ENCODE measurements at regions of chr11 and their contacts with region 1.

Region 1: DNA sequence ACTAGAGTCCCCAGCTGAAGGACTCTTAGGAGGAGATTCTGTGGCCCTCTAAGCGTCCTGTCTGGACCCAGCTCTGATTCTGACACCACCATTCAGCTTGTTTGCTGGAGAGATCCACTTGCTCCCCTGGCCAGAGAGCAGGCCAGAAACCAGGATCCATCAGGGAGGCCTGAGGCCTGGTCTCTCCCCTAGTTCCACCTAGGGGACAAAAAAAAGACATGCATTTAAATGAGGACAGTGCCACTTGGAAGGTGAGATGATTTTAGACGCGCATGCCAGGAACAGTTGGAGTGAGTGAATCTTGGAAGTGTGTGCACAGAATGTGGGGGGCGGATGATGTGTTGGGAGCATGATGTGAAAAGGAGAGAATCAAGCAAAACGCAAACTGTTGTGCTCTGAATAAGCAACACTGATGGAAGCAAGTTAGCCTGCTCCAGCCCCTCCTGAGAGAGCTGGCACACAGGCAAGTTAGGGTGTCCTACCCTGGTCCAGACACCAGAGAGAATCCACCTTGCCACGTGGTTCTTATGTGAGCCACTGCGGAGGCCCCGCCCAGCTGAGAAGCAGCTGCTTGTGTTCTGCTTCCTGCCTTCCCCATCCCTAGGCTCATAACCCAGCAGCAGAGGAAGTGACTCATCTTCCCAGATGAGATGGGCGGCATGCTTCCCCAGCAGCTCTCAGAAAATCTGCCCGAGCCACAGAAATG is 8.0 kb upstream of the SLCO2B1 start:
- DNase-seq: peak; percentile 28 to 79 (median 49)
- ATAC-seq: peak; percentile 92 to 96 (median 96)
- H3K4me3 ChIP-seq: no peak overlapping the region
- H3K4me3 Mint-ChIP-seq: peak overlapping the region; percentile 35 to 61 (median 44)
- H3K27ac ChIP-seq: peak overlapping the region; percentile 50
- H3K27ac Mint-ChIP-seq: peak overlapping the region; percentile 92 to 96
- H3K4me1 ChIP-seq: peaks cover 11 to 40% of the 10 kb centered on the region in 2 experiments
- H3K4me1 Mint-ChIP-seq: peaks cover 40 to 46% (median 41%) of the 10 kb centered on the region in 3 donors
- H3K27me3 ChIP-seq: no peaks in the 10 kb centered on the region
- H3K27me3 Mint-ChIP-seq: peaks cover 3 to 4% of the 10 kb centered on the region in 2 donors

Region 2: DNA sequence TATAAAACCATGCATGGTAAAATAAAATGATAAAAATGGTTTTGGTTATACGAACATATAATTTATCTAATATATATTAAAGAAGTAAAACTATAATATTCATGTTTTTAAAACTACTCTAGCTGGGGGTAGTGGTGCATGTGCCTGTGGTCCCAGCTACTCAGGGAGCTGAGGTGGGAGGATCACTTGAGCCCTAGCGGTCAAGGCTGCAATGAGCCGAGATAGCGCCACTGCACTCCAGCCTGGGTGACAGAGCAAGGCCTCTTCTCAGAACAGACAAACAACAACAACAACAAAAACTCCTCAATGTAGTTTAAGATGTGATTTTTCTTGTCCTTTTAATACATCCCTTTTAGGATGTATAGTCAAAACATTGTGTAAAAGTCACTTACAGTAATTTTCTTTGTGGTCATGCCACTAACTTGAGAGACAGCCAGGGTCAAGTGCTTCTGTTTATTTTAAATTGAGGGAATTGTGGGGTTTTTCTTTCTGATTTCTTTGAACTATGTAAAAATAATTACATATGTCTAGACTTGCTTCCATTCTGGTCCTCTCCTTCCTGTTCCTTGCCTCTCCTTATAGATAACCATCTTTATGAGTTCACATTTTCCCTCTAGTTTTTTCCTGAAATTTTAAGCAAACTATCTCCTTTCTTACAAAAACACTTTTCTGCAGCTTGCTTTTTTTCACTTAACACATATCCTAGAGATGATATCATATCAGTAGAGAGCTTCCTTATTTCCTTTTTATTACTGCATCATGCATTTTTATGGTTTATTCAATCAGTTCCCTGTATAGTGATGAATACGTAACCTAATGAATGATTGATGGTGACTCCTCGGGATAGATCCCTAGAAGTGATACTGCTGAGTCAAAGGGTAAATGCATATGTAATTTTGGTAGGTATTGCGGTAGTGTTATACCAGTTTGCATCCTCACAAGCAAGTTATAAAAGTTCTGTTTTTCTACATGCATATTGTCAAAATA is 55.3 kb before region 1 on chr11:
- CTCF ChIA-PET with region 1: no interaction called
- POLR2A ChIA-PET with region 1: no interaction called
- DNase-seq: no peak
- ATAC-seq: no peak
- H3K4me3 ChIP-seq: no peak overlapping the region
- H3K4me3 Mint-ChIP-seq: no peak overlapping the region
- H3K27ac ChIP-seq: no peak overlapping the region
- H3K27ac Mint-ChIP-seq: no peak overlapping the region
- H3K4me1 ChIP-seq: no peaks in the 10 kb centered on the region
- H3K4me1 Mint-ChIP-seq: peaks cover 0 to 6% (median 0%) of the 10 kb centered on the region in 3 donors
- H3K27me3 ChIP-seq: peaks cover 2 to 13% of the 10 kb centered on the region in 2 experiments
- H3K27me3 Mint-ChIP-seq: peaks cover 28% of the 10 kb centered on the region in 2 donors

Region 3: DNA sequence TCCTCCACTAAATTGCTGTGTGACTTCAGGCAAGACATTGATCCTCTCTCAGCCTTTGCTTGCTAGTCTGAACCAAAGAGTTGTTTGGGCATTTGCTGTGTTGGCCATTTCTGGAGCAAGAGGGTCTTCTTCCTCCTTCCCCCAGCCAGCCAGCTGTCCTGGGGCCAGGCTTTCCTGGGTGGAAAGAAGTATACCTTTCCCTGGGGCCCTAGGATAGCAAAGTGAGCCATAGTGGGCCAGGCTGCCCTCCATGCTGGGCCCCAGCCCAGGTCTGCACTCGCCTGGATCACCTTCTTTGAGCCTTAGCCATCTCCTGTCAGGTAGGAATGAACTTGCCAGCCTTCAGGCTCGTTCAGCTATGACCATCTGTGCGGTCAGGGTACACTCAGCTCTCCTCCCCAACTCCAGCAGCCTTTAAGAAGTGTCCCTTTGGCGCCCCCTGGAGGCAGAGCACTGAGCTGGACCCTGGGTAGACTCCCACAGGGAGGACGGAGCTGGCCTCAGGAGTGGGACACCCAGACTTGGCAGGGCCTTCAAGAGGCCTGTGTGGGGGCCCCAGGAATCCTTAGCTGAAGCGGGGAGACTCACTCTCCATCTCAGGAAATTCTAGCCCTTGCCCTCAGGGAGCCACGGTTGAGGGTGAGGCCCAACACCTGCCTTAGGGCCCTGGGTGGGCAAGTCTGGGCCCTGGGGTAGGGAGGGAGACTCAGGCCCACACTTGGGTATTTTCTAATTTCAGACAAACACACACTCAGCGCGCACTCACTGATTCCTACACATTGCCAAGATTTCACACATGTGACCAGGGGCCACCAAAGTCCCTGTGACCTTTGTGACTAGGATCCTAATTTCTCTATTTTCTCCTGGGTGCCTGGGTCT is 62.1 kb after region 1 on chr11:
- CTCF ChIA-PET with region 1: interaction called, 6 to 53 read pairs
- POLR2A ChIA-PET with region 1: no interaction called
- DNase-seq: peak; percentile 38 to 85 (median 71)
- ATAC-seq: peak; percentile 74 to 87 (median 80)
- H3K4me3 ChIP-seq: no peak overlapping the region
- H3K4me3 Mint-ChIP-seq: no peak overlapping the region
- H3K27ac ChIP-seq: no peak overlapping the region
- H3K27ac Mint-ChIP-seq: no peak overlapping the region
- H3K4me1 ChIP-seq: peaks cover 0 to 4% of the 10 kb centered on the region in 2 experiments
- H3K4me1 Mint-ChIP-seq: no peaks in the 10 kb centered on the region
- H3K27me3 ChIP-seq: peaks cover 0 to 41% of the 10 kb centered on the region in 2 experiments
- H3K27me3 Mint-ChIP-seq: peaks cover 3 to 4% of the 10 kb centered on the region in 2 donors

Region 4: DNA sequence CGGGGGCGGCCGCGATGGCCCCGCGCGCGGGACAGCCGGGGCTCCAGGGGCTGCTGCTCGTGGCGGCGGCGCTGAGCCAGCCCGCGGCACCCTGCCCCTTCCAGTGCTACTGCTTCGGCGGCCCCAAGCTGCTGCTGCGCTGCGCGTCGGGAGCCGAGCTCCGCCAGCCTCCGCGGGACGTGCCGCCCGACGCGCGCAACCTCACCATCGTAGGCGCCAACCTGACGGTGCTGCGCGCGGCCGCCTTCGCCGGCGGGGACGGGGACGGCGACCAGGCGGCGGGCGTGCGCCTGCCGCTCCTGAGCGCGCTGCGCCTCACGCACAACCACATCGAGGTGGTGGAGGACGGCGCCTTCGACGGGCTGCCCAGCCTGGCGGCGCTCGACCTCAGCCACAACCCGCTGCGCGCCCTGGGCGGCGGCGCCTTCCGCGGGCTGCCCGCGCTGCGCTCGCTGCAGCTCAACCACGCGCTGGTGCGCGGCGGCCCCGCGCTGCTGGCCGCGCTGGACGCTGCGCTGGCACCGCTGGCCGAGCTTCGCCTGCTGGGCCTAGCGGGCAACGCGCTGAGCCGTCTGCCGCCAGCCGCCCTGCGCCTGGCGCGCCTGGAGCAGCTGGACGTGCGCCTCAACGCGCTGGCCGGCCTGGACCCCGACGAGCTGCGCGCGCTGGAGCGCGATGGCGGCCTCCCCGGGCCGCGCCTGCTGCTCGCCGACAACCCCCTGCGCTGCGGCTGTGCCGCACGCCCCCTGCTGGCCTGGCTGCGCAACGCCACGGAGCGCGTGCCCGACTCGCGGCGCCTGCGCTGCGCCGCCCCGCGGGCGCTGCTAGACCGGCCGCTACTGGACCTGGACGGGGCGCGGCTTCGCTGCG is 98.4 kb after region 1 on chr11:
- CTCF ChIA-PET with region 1: interaction called, 4 to 22 read pairs
- POLR2A ChIA-PET with region 1: no interaction called
- DNase-seq: peak in 34 of 35 experiments; percentile 67 to 92 (median 78)
- ATAC-seq: peak; percentile 90 to 93 (median 92)
- H3K4me3 ChIP-seq: peak overlapping the region; percentile 34 to 71
- H3K4me3 Mint-ChIP-seq: peak overlapping the region; percentile 68 to 84 (median 73)
- H3K27ac ChIP-seq: no peak overlapping the region
- H3K27ac Mint-ChIP-seq: no peak overlapping the region
- H3K4me1 ChIP-seq: peaks cover 0 to 13% of the 10 kb centered on the region in 2 experiments
- H3K4me1 Mint-ChIP-seq: peaks cover 6 to 13% (median 10%) of the 10 kb centered on the region in 3 donors
- H3K27me3 ChIP-seq: peaks cover 14 to 60% of the 10 kb centered on the region in 2 experiments
- H3K27me3 Mint-ChIP-seq: peaks cover 26 to 44% of the 10 kb centered on the region in 2 donors

Region 5: DNA sequence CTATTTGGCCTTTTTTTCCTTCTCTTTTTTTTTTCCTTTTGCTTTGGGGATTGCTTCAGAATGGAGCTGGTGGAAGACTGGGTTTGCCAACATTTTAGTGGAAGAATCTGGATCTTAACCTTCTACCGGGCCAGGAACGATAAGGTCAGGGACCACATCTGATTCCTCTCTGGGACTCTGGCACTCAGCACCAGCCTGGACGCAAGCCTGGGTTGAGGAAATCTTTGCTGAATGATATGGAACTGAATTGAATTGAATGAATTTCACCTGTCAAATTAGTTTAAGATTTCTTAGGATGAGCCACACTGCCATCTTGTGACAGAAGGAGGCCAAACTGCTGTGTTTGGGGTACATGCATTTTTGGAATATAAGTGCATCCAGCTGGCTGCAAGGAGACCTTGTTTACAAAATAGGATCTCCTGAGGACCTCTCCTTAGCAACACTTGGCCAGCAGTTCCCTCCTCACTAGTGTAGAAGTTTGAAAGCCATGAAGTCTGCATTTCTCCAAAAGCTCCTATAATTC is 128.1 kb after region 1 on chr11:
- CTCF ChIA-PET with region 1: interaction called, 27 to 36 read pairs
- POLR2A ChIA-PET with region 1: no interaction called
- DNase-seq: peak in 16 of 35 experiments; percentile 6 to 61 (median 27)
- ATAC-seq: no peak
- H3K4me3 ChIP-seq: no peak overlapping the region
- H3K4me3 Mint-ChIP-seq: peak overlapping the region in 1 of 3 donors; percentile 37
- H3K27ac ChIP-seq: no peak overlapping the region
- H3K27ac Mint-ChIP-seq: peak overlapping the region; percentile 97 to 99
- H3K4me1 ChIP-seq: peaks cover 25 to 45% of the 10 kb centered on the region in 2 experiments
- H3K4me1 Mint-ChIP-seq: peaks cover 35 to 48% (median 37%) of the 10 kb centered on the region in 3 donors
- H3K27me3 ChIP-seq: no peaks in the 10 kb centered on the region
- H3K27me3 Mint-ChIP-seq: no peaks in the 10 kb centered on the region

Measured in T-cell (primary cell).